B cell (primary cell): ENCODE measurements at regions of chr4 and their contacts with region 1.

Region 1: GRCh38 chr4:151015459-151016347 is 619 bp upstream of the LRBA start:
- DNase-seq: peak; percentile 92
- ATAC-seq: peak; percentile 77
- H3K4me3 ChIP-seq: peak overlapping the region; percentile 77 to 97 (median 91)
- H3K4me3 Mint-ChIP-seq: peak overlapping the region; percentile 100
- H3K27ac ChIP-seq: peak overlapping the region; percentile 89 to 95
- H3K27ac Mint-ChIP-seq: peak overlapping the region; percentile 99
- H3K4me1 ChIP-seq: peaks cover 29 to 32% of the 10 kb centered on the region in 2 donors
- H3K4me1 Mint-ChIP-seq: peaks cover 33% of the 10 kb centered on the region
- H3K27me3 ChIP-seq: no peaks in the 10 kb centered on the region
- H3K27me3 Mint-ChIP-seq: no peaks in the 10 kb centered on the region
- CTCF ChIP-seq: no peak

Region 2: DNA sequence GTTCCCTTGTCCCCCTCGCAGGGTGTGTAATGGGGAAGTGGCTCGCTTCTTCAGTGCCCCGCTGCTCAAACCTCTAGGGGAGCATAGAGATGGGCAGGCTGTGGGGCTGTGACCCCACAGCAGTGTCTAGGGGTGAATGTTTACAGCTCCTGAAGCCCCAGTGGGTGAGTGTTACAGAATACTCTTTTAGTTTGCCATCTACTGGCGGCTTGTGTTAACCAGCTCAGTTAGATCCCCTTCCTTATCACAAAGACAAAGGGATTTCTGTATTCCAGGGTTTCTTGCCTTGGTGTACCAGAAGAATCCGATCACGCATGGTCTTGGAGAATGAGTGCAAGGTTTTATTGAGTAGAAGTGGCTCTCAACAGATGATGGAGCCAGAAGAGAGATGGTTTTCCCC is 1092.0 kb before region 1 on chr4:
- CTCF ChIA-PET with region 1: no interaction called
- POLR2A ChIA-PET with region 1: no interaction called
- intact Hi-C with region 1: no loop called
- DNase-seq: no peak
- ATAC-seq: no peak
- H3K4me3 ChIP-seq: no peak overlapping the region
- H3K4me3 Mint-ChIP-seq: no peak overlapping the region
- H3K27ac ChIP-seq: no peak overlapping the region
- H3K27ac Mint-ChIP-seq: no peak overlapping the region
- H3K4me1 ChIP-seq: no peaks in the 10 kb centered on the region
- H3K4me1 Mint-ChIP-seq: no peaks in the 10 kb centered on the region
- H3K27me3 ChIP-seq: no peaks in the 10 kb centered on the region
- H3K27me3 Mint-ChIP-seq: no peaks in the 10 kb centered on the region
- CTCF ChIP-seq: no peak

Region 3: GRCh38 chr4:150999086-150999485 is 16.6 kb before region 1 on chr4:
- CTCF ChIA-PET with region 1: interaction called, 4 read pairs
- POLR2A ChIA-PET with region 1: interaction called, 7 read pairs
- intact Hi-C with region 1: loop called (anchors 1 kb)
- DNase-seq: peak; percentile 44
- ATAC-seq: peak; percentile 51
- H3K4me3 ChIP-seq: peak overlapping the region in 1 of 5 experiments; percentile 38
- H3K4me3 Mint-ChIP-seq: peak overlapping the region; percentile 42
- H3K27ac ChIP-seq: peak overlapping the region; percentile 24 to 64
- H3K27ac Mint-ChIP-seq: peak overlapping the region; percentile 51
- H3K4me1 ChIP-seq: peaks cover 24 to 35% of the 10 kb centered on the region in 2 donors
- H3K4me1 Mint-ChIP-seq: peaks cover 60% of the 10 kb centered on the region
- H3K27me3 ChIP-seq: no peaks in the 10 kb centered on the region
- H3K27me3 Mint-ChIP-seq: no peaks in the 10 kb centered on the region
- CTCF ChIP-seq: no peak

Region 4: DNA sequence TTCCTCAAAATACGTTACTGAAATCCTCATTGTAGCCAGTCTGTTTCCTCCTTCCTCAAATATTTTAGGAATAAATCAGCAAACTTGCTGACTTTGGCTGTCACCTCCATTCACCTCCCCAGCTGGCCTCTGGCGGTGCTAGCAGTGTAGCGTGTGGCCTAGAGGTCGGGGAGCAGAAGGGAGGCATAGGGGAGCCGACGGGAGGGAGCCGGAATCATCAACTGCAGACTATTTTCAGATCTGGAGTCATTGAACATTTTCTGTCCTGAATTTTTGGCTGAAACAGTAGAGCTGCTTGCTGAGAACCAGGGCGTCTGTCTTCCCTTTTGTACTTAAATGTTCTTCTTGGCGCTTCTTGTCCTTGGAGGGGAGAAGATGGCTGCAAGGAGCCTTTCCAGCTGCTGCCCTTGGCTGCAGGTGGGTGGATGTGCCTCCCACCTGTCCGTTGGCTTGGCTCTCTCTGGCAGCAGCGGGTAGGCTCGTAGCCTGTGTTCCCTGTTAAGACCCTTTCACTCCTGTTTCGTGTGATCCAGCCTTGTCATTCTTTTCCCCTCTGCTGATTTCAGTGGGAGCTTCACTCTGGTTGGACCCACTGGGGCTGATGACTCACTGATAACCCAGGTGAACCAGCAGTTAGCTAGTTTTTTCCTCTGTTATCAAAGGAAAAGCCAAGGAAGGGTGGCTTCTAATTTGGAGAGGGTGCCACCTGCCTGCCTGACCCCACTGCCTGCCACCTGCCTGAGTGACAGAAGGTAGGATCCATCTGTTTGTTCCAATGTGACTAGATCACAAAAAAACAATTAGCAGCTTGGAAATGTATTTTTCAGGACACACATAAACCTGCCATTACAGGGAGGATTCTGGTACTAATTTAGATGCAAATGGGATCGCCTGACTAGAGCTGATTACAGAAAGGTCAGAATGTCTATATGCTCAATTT is 609.2 kb after region 1 on chr4:
- CTCF ChIA-PET with region 1: no interaction called
- POLR2A ChIA-PET with region 1: no interaction called
- intact Hi-C with region 1: no loop called
- DNase-seq: no peak
- ATAC-seq: no peak
- H3K4me3 ChIP-seq: no peak overlapping the region
- H3K4me3 Mint-ChIP-seq: no peak overlapping the region
- H3K27ac ChIP-seq: no peak overlapping the region
- H3K27ac Mint-ChIP-seq: no peak overlapping the region
- H3K4me1 ChIP-seq: no peaks in the 10 kb centered on the region
- H3K4me1 Mint-ChIP-seq: no peaks in the 10 kb centered on the region
- H3K27me3 ChIP-seq: peaks cover 0 to 2% (median 0%) of the 10 kb centered on the region in 4 experiments
- H3K27me3 Mint-ChIP-seq: peaks cover 23% of the 10 kb centered on the region
- CTCF ChIP-seq: no peak